A549 (cell line): ENCODE measurements at regions of chr6 and their contacts with region 1.

Region 1: GRCh38 chr6:32838114-32838958 is at the start of gene TAP2:
- DNase-seq: peak; percentile 88 to 90
- ATAC-seq: peak; percentile 94 to 98
- H3K4me3 ChIP-seq: peak within 1 kb of the TSS; percentile 74
- H3K27ac ChIP-seq: peak within 1 kb of the TSS; percentile 83 to 90
- H3K4me1 ChIP-seq: peaks cover 8% of the 10 kb centered on the region; the same call in 1 of the 3 replicates
- CTCF ChIP-seq: peak; percentile 81
- EP300 ChIP-seq: no peak
- POLR2A ChIP-seq: peak; percentile 29
- RAD21 ChIP-seq: peak; percentile 90 to 91
- polyA plus RNA-seq, gene TAP2: 11.4 and 12.1 TPM in 2 replicates

Region 2: GRCh38 chr6:32819729-32820128 is 18.6 kb before region 1 on chr6:
- CTCF ChIA-PET with region 1: interaction called, 21 read pairs
- POLR2A ChIA-PET with region 1: no interaction called
- DNase-seq: peak in 1 of 2 experiments; percentile 43
- ATAC-seq: peak in 1 of 2 experiments; percentile 29; a peak in 1 of 6 replicates
- H3K4me3 ChIP-seq: no peak overlapping the region
- H3K27ac ChIP-seq: peak overlapping the region; percentile 21 to 39; a peak in 2 of 6 replicates
- H3K4me1 ChIP-seq: peaks cover 7% of the 10 kb centered on the region; the same call in 2 of the 3 replicates
- CTCF ChIP-seq: no peak
- EP300 ChIP-seq: no peak
- POLR2A ChIP-seq: no peak
- RAD21 ChIP-seq: no peak

Region 3: GRCh38 chr6:32860674-32861073 is 22.3 kb after region 1 on chr6:
- CTCF ChIA-PET with region 1: interaction called, 253 read pairs
- POLR2A ChIA-PET with region 1: interaction called, 12 read pairs
- DNase-seq: no peak
- ATAC-seq: no peak
- H3K4me3 ChIP-seq: no peak overlapping the region
- H3K27ac ChIP-seq: peak overlapping the region in 1 of 2 experiments; percentile 69; a peak in 2 of 6 replicates
- H3K4me1 ChIP-seq: peaks cover 9% of the 10 kb centered on the region; the same call in 2 of the 3 replicates
- CTCF ChIP-seq: no peak
- EP300 ChIP-seq: no peak
- POLR2A ChIP-seq: no peak
- RAD21 ChIP-seq: no peak

Region 4: DNA sequence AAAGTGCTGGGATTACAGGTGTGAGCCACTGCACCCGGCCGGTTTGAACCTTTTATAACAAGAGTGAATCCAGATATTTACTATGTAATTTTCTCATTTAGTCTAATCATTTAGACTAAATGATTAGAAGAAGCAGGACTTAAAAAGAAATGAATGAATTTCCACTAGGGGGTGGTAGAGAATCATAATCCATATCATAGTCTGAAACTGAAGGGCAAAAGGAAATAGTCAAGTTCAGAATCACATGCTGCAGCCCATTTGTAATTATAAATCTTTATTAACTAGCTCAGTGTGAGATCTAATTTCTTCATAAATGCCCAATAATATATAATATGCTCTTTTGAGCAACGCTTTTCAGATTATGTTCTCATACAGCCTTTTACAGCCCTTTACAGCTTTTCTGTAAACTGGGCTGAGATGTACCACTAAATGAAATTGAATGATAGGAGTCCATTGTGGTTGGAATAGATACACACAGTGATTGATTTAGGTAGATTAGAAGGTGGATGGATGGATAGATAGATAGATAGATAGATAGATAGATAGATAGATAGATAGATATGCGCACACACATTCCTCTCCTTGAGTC is 47.5 kb after region 1 on chr6:
- CTCF ChIA-PET with region 1: interaction called, 11 read pairs
- POLR2A ChIA-PET with region 1: no interaction called
- DNase-seq: peak; percentile 39 to 66
- ATAC-seq: peak in 1 of 2 experiments; percentile 76; a peak in 3 of 6 replicates
- H3K4me3 ChIP-seq: no peak overlapping the region
- H3K27ac ChIP-seq: 0 out of 6 replicates have a peak overlapping the region, but pooled peaks of 1 of the 2 experiments have one; percentile 5
- H3K4me1 ChIP-seq: peaks cover 16% of the 10 kb centered on the region
- CTCF ChIP-seq: peak; percentile 66
- EP300 ChIP-seq: no peak
- POLR2A ChIP-seq: no peak
- RAD21 ChIP-seq: peak; percentile 80 to 82

Region 5: GRCh38 chr6:32947552-32948465 is 109.5 kb after region 1 on chr6:
- CTCF ChIA-PET with region 1: interaction called, 21 read pairs
- POLR2A ChIA-PET with region 1: no interaction called
- DNase-seq: peak in 1 of 2 experiments; percentile 75
- ATAC-seq: peak; percentile 92 to 95
- H3K4me3 ChIP-seq: no peak overlapping the region
- H3K27ac ChIP-seq: no peak overlapping the region
- H3K4me1 ChIP-seq: peaks cover 4% of the 10 kb centered on the region; the same call in 1 of the 3 replicates
- CTCF ChIP-seq: peak; percentile 78
- EP300 ChIP-seq: no peak
- POLR2A ChIP-seq: no peak
- RAD21 ChIP-seq: peak; percentile 91 to 94

Region 6: GRCh38 chr6:32984605-32985389 is 146.5 kb after region 1 on chr6:
- CTCF ChIA-PET with region 1: interaction called, 17 read pairs
- POLR2A ChIA-PET with region 1: no interaction called
- DNase-seq: peak; percentile 52 to 86
- ATAC-seq: peak; percentile 75 to 83
- H3K4me3 ChIP-seq: no peak overlapping the region
- H3K27ac ChIP-seq: no peak overlapping the region
- H3K4me1 ChIP-seq: peaks cover 11% of the 10 kb centered on the region
- CTCF ChIP-seq: peak; percentile 87
- EP300 ChIP-seq: no peak
- POLR2A ChIP-seq: no peak
- RAD21 ChIP-seq: peak; percentile 84 to 85